A673 (cell line): ENCODE measurements at regions of chr11 and their contacts with region 1.

Region 1: DNA sequence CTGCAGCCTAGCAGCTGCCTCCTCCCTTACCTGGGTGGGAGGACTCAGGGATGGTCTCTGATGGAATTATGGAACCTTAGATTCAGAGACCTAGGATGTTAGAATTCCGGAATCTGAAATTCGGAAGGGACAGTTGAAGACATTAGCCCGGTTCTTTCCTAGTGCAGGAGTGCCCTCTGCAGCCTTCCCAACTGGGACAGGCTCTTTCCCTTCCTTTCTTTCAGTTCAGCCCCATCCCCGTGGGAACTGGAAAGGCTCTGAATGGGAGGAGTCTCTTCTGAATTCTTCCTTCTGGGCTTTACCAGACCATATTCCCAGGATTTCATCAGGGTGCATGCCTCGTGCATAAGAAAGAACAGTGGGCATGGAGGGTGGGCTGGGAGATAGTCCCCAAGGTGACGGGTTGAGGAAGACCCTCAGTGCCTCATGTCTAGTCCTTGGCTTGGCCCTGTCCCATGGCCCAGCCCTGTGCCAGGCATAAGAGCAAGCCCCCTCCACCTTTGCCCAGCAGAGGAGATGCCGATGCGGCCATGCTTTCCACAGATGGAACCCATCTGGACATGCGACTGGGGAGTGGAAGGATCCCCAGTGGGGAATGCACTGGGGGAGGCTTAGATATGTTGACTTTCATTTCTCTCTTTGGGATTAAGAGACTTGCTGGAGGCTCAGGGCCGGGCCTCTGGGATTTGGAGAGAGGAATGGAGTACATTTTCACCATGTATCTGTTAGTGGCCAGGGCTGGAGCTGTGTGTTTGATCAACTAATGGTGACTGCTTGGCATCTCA is 14.4 kb downstream of the DNAJB13 start:
- DNase-seq: no peak
- H3K4me3 ChIP-seq: peak overlapping the region; percentile 9
- H3K27ac ChIP-seq: no peak overlapping the region
- H3K4me1 ChIP-seq: peaks cover 8% of the 10 kb centered on the region
- H3K27me3 ChIP-seq: no peaks in the 10 kb centered on the region
- CTCF ChIP-seq: no peak

Region 2: DNA sequence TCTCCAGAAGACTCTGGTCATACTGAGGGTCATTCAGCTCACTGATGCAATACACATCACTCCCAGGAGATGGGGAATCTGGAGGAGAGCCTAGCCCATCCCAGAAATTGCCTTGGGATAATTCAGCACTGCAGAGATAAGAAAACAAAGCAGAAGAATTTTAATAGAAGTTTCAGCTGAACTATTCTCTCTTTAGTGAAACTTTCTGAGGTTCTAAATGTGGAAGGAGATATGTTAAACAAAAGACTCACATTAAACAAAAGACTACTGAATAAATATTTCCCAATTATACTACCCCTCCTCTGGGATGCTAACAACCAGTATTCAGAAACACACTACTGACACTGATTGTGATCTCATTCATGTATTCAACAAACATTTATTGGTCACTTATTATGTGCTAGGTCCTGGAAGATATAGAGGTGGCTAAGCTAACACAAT is 157.8 kb after region 1 on chr11:
- CTCF ChIA-PET with region 1: no interaction called
- POLR2A ChIA-PET with region 1: interaction called, 10 read pairs
- intact Hi-C with region 1: no loop called
- DNase-seq: no peak
- H3K4me3 ChIP-seq: no peak overlapping the region
- H3K27ac ChIP-seq: no peak overlapping the region
- H3K4me1 ChIP-seq: no peaks in the 10 kb centered on the region
- H3K27me3 ChIP-seq: no peaks in the 10 kb centered on the region
- CTCF ChIP-seq: no peak

Region 3: DNA sequence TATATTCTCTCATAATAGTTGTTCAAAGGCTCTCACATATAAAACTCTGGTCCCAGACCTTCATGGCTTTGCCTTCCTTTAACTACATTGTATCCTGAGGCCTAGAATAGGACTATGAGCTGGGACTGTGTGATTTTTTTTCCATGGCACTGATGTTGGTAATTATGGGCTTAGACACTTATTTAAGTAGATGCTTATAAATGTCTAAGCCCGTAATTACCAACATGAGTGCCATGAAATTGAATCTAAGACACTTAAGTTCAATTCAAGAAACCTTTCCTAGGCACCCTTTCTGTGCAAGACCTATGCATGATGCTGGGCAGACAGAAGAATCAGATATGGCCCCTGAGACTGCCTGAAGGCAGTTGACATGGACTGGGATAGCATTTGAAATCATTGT is 283.2 kb after region 1 on chr11:
- CTCF ChIA-PET with region 1: no interaction called
- POLR2A ChIA-PET with region 1: no interaction called
- intact Hi-C with region 1: loop called (anchors 5 kb)
- DNase-seq: peak; percentile 58
- H3K4me3 ChIP-seq: no peak overlapping the region
- H3K27ac ChIP-seq: no peak overlapping the region
- H3K4me1 ChIP-seq: no peaks in the 10 kb centered on the region
- H3K27me3 ChIP-seq: no peaks in the 10 kb centered on the region
- CTCF ChIP-seq: no peak

Region 4: GRCh38 chr11:74321487-74322188 is 356.4 kb after region 1 on chr11:
- CTCF ChIA-PET with region 1: interaction called, 3 read pairs
- POLR2A ChIA-PET with region 1: no interaction called
- intact Hi-C with region 1: loop called (anchors 10 kb)
- DNase-seq: peak; percentile 57
- H3K4me3 ChIP-seq: no peak overlapping the region
- H3K27ac ChIP-seq: no peak overlapping the region
- H3K4me1 ChIP-seq: peaks cover 13% of the 10 kb centered on the region
- H3K27me3 ChIP-seq: no peaks in the 10 kb centered on the region
- CTCF ChIP-seq: peak; percentile 84

Region 5: GRCh38 chr11:74570266-74571061 is 605.2 kb after region 1 on chr11:
- CTCF ChIA-PET with region 1: interaction called, 12 read pairs
- POLR2A ChIA-PET with region 1: no interaction called
- intact Hi-C with region 1: loop called (anchors 2 kb)
- DNase-seq: peak; percentile 81
- H3K4me3 ChIP-seq: no peak overlapping the region
- H3K27ac ChIP-seq: no peak overlapping the region
- H3K4me1 ChIP-seq: no peaks in the 10 kb centered on the region
- H3K27me3 ChIP-seq: no peaks in the 10 kb centered on the region
- CTCF ChIP-seq: peak; percentile 93